ENCODE measurements at regions of chr7 and their contacts with region 1.

Region 1: DNA sequence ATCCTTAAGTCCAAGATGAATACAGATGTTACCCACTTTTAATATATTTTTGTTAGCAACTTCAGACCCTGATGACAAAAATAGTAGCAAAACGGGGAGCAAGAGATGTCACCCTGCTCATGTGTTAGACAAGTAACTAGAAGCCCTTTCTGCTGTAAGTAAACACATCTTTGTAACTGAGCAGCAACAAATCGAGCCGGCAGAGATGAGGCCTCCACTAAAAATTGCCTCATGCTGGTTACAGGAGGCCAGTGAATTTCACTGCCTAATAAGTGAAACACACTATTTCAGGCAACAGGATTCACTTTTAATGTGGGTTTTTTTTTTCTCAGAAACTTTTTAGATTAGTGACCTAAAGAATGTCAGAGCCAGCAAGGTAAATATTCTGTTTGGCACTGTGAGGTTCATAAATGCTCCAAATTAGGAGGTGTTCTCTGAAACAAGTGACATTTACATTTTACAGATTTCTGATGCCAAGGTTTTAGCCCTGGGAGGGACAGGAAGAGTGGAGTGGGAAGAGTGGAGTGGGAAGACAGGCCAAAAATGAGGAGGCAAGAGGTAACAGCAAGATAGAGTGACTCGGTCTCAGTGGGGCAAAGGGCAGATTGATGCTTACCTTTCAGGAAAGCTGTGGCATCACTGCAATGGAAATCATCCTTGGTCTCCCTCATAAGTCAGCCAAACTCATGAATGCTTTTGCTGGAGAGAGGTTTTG is 53.6 kb upstream of the LRRC17 start:
- DNase-seq: no peak
- ATAC-seq: no peak
- H3K4me3 Mint-ChIP-seq: no peak overlapping the region
- H3K27ac Mint-ChIP-seq: no peak overlapping the region
- H3K4me1 Mint-ChIP-seq: no peaks in the 10 kb centered on the region
- H3K27me3 Mint-ChIP-seq: no peaks in the 10 kb centered on the region

Region 2: GRCh38 chr7:102912742-102913141 is 53.5 kb after region 1 on chr7 and contains the start of gene LRRC17:
- CTCF ChIA-PET with region 1: no interaction called
- POLR2A ChIA-PET with region 1: no interaction called
- intact Hi-C with region 1: loop called in 1 of 2 experiments (anchors 10 kb)
- DNase-seq: no peak
- ATAC-seq: no peak
- H3K4me3 Mint-ChIP-seq: no peak within 1 kb of the TSS
- H3K27ac Mint-ChIP-seq: no peak within 1 kb of the TSS
- H3K4me1 Mint-ChIP-seq: no peaks in the 10 kb centered on the region
- H3K27me3 Mint-ChIP-seq: no peaks in the 10 kb centered on the region
- total RNA-seq, gene LRRC17: 0.21 to 0.25 TPM

Measured in activated CD4-positive, alpha-beta T cell treated with anti-CD3 and anti-CD28 coated beads for 36 hours (primary cell).